Gastrocnemius medialis (tissue), 4 donors: ENCODE measurements at regions of chr7 and their contacts with region 1.

Region 1: DNA sequence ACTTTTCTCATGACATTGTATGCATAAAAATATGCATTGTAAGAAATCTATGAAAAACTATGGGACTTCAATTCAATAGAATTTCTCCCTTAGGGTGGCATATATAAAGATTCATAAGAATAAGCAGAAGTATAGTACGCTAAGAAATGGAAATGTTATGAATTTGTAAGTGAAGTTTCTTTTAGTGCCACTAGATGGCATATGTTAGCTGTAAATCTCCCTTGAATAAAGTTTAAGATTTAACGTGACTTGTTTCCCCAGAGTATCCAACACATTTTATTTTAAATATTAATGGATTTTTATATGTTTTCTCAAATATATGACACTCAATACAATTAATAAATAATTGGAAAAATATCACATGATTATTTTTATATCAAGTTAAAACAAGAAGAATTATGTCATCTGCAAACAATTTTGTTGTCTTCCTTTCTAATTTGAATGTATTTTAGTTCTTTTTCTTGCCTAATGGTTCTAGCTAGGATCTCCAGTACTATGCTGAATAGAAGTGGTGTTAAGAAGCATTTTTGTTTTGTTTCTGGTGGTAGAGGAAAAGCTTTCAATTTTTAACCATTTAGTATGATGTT is 287.2 kb downstream of the HGF start:
- DNase-seq: no peak
- ATAC-seq: no peak
- H3K4me3 ChIP-seq: no peak overlapping the region
- H3K27ac ChIP-seq: no peak overlapping the region
- H3K4me1 ChIP-seq: no peaks in the 10 kb centered on the region
- H3K27me3 ChIP-seq: no peaks in the 10 kb centered on the region
- CTCF ChIP-seq: peak; percentile 31 to 69 (median 57)
- POLR2A ChIP-seq: no peak

Region 2: GRCh38 chr7:81128011-81128410 is 354.7 kb before region 1 on chr7:
- in situ Hi-C with region 1: no loop called
- intact Hi-C with region 1: no loop called
- DNase-seq: no peak
- ATAC-seq: no peak
- H3K4me3 ChIP-seq: peak overlapping the region in 1 of 4 donors; percentile 8
- H3K27ac ChIP-seq: no peak overlapping the region
- H3K4me1 ChIP-seq: no peaks in the 10 kb centered on the region
- H3K27me3 ChIP-seq: no peaks in the 10 kb centered on the region
- CTCF ChIP-seq: no peak
- POLR2A ChIP-seq: no peak

Region 3: DNA sequence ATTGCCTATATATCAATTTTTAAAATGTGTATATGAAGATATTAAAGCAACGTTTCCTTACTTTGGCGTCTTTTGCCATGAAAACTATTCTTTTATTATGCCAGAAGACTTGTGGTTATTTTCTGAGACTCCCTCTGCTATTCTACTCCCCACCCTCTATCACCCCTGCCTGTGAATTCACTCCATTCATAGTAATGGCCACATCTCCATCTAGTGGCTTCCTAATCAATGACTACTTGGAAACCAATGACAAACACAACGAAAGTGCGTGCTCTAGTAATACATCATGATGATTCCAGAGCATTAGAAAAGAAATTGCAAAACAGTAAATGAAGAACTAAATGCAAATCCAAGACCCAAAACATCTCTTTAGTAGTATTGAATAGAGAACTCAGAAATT is 473.8 kb after region 1 on chr7:
- in situ Hi-C with region 1: loop called in 2 of 4 experiments (anchors 10 to 25 kb)
- intact Hi-C with region 1: no loop called
- DNase-seq: no peak
- ATAC-seq: peak in 1 of 2 donors; percentile 38
- H3K4me3 ChIP-seq: no peak overlapping the region
- H3K27ac ChIP-seq: no peak overlapping the region
- H3K4me1 ChIP-seq: peaks cover 8 to 18% of the 10 kb centered on the region in 2 donors
- H3K27me3 ChIP-seq: no peaks in the 10 kb centered on the region
- CTCF ChIP-seq: no peak
- POLR2A ChIP-seq: no peak

Region 4: DNA sequence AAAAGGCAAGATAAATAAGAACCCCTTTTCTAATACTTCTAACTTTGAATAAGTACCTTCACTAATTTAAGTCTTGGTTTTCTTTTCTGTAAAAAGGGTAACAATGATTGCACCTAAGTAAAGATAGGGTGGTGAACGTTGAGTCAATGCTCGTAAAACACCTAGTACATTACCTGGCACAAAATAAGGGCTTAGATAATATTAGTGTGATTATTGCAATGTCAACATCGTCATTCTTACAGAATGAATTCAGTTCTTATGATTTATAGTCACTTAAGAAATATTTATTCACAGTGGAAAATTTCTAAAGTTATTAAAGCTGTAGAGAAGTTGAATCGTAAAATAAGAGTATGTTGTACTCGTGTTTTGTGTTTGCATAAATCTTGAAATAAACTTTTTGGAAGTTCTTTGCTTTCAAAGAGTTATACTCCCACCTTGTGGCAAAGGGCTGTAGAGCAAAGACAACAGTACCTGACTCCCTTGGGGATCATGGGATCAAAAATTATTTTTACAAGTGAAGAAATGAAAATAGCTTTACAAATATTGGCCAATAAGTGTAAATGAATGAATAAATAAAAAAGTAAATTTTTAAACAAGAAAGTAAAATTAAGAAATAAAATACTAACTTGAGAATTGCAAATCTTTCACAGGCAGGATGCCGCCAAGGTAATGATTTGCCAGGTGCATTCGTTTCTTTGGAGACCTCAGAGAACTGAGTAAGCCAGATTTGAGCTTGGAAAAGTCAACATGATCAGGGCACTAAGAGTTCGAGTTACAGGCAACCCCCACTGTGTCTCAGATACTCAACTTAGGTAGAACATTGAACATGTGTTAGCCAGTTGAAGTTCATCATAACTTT is 1246.7 kb after region 1 on chr7:
- in situ Hi-C with region 1: no loop called
- intact Hi-C with region 1: loop called (anchors 5 kb)
- DNase-seq: no peak
- ATAC-seq: no peak
- H3K4me3 ChIP-seq: no peak overlapping the region
- H3K27ac ChIP-seq: no peak overlapping the region
- H3K4me1 ChIP-seq: no peaks in the 10 kb centered on the region
- H3K27me3 ChIP-seq: no peaks in the 10 kb centered on the region
- CTCF ChIP-seq: peak in 2 of 5 experiments; percentile 12 to 35
- POLR2A ChIP-seq: no peak